Lower leg skin (tissue), 4 donors: ENCODE measurements at regions of chr11 and their contacts with region 1.

Region 1: DNA sequence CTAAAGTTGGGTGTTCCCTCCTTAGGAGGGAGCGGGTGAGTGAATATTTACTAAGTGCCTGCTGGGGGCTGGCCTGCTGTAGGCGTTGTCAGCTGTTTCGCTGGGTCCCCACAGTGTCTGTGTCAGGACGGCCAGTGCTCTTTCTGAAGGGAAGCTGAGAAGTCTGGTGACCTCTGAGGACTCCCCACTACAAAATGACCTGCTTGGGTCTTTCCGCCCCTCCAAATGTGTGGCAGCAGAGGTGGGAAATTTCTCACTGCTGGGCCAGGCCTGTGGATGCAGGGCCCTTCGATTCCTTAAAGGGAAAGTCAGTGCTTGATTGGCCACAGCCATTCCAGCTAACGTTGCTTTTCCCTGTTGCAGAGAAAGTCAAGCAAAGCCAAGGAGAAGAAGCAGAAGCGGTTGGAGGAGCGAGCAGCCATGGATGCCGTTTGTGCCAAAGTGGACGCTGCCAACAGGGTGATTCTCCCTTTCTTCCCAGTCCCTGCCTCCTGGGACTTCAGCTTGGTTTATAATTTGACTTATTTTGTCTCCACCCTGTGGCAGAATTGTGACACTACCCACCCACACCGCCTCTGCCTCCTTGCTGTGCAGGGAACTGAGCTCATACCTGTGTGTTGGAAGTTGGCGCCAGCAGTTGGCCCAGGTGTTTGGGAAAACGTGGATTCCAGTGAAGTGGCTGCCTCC is 6.8 kb downstream of the NAA40 start:
- DNase-seq: peak; percentile 77 to 93
- H3K4me3 ChIP-seq: no peak overlapping the region
- CTCF ChIP-seq: peak in 1 of 3 donors; percentile 73
- POLR2A ChIP-seq: no peak

Region 2: GRCh38 chr11:63768237-63769043 is 177.2 kb before region 1 on chr11 and contains the start of gene ZFTA:
- intact Hi-C with region 1: loop called (anchors 10 kb)
- DNase-seq: no peak
- H3K4me3 ChIP-seq: peak within 1 kb of the TSS; percentile 62
- CTCF ChIP-seq: no peak
- POLR2A ChIP-seq: no peak
- total RNA-seq, gene ZFTA: 7.8 to 9.8 (median 8.6) TPM

Region 3: GRCh38 chr11:63837027-63837688 is 108.5 kb before region 1 on chr11:
- intact Hi-C with region 1: loop called (anchors 2 kb)
- DNase-seq: peak; percentile 83 to 96
- H3K4me3 ChIP-seq: no peak overlapping the region
- CTCF ChIP-seq: peak in 1 of 3 donors; percentile 68
- POLR2A ChIP-seq: no peak